ENCODE measurements at regions of chr11 and their contacts with region 1.

Region 1: DNA sequence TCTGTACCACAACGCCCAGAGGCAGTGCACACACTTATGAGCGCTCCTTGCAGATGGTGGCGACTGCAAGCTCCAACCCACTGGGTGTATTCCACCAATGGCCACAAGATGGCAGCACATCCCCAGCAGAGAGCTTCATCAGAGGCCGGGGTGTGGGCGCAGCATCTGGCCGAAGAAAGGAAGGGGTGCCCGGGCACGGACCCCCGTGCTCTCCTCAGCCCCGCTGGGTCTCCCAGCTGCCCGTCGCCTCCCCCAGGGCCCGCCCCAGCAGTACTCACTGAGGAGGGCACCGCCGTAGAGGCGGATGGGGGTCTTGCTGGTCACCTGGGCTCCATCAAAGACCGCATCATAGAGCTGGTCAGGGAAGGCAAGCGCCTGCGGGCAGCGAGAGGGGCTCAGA is 14.2 kb downstream of the TP53I11 start:
- DNase-seq: peak; percentile 80
- H3K4me3 ChIP-seq: no peak overlapping the region
- H3K27ac ChIP-seq: no peak overlapping the region
- H3K4me1 ChIP-seq: no peaks in the 10 kb centered on the region
- CTCF ChIP-seq: peak; percentile 95

Region 2: DNA sequence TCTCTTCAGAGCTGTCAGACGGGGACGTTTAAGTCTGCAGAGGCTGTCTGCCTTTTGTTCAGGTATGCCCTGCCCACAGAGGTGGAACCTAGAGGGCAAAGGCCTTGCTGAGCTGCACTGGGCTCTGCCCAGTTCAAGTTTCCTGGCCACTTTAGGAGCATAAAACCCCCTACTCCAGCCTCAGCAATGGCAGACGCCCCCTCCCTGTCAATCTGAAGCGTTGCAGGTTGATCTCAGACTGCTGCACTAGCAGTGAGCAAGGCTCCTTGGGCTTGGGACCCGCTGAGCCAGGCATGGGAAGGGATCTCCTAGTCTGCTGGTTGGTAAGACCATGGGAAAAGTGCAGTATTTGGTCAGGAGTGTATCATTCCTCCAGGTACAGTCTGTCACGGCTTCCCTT is 80.8 kb after region 1 on chr11:
- CTCF ChIA-PET with region 1: no interaction called
- POLR2A ChIA-PET with region 1: no interaction called
- intact Hi-C with region 1: loop called (anchors 5 kb)
- DNase-seq: no peak
- H3K4me3 ChIP-seq: no peak overlapping the region
- H3K27ac ChIP-seq: no peak overlapping the region
- H3K4me1 ChIP-seq: peaks cover 18% of the 10 kb centered on the region
- CTCF ChIP-seq: peak; percentile 55

Region 3: GRCh38 chr11:45102810-45103621 is 166.5 kb after region 1 on chr11:
- CTCF ChIA-PET with region 1: interaction called, 48 read pairs
- POLR2A ChIA-PET with region 1: interaction called, 12 read pairs
- intact Hi-C with region 1: loop called (anchors 1 kb)
- DNase-seq: peak; percentile 66
- H3K4me3 ChIP-seq: no peak overlapping the region
- H3K27ac ChIP-seq: no peak overlapping the region
- H3K4me1 ChIP-seq: peaks cover 3% of the 10 kb centered on the region
- CTCF ChIP-seq: peak; percentile 100

Region 4: GRCh38 chr11:45294499-45294898 is 358.0 kb after region 1 on chr11:
- CTCF ChIA-PET with region 1: no interaction called
- POLR2A ChIA-PET with region 1: no interaction called
- intact Hi-C with region 1: loop called (anchors 5 kb)
- DNase-seq: no peak
- H3K4me3 ChIP-seq: no peak overlapping the region
- H3K27ac ChIP-seq: no peak overlapping the region
- H3K4me1 ChIP-seq: peaks cover 14% of the 10 kb centered on the region
- CTCF ChIP-seq: no peak

Measured in OCI-LY7 (cell line).